K562 (cell line): ENCODE measurements at regions of chr14 and their contacts with region 1.

Region 1: DNA sequence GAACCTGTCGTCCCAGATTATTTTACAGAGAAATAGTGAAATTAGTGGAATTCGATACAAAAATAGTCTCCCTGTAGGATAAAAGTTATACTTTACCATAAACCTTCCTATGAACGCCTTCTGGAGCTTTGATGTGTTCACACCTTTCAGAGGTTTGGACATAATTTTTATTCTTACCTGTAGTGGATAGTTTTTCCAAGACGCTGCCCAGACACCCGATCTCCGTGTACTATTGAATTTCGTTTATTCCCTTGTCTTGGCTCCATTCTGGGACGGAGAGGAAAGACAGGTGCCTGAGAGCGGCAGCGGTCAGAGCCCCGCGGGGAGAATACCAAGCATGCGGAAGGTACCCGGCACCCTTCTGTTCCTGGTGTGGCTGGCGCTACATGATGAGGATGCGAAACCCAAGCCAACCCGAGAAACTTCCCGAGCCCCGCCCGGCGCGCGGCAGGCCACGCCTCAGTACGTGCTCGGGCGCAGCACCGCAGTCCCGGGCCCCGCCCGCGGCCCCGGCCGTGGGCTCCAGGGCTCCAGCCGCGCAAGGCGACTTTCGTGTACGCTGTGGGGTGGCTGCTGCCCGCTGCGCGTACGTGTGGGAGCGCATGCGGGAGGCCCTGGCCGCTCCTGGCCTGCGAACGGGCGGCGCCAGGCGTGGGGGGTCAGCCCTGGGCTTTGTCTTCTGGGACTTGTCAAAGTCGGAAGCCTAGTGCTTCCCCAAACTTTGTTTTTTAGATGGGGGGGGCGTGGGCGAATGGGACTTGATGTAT is 11.3 kb upstream of the SNAPC1 start:
- DNase-seq: peak; percentile 76 to 88 (median 82)
- ATAC-seq: peak; percentile 96
- H3K4me3 ChIP-seq: peak overlapping the region; percentile 65
- H3K27ac ChIP-seq: peak overlapping the region; percentile 60
- H3K4me1 ChIP-seq: peaks cover 5 to 13% of the 10 kb centered on the region in 2 experiments; a peak in 3 of 5 replicates
- H3K27me3 ChIP-seq: no peaks in the 10 kb centered on the region
- CTCF ChIP-seq: no peak
- EP300 ChIP-seq: no peak
- POLR2A ChIP-seq: peak; percentile 55; the same call in 1 of the 2 replicates
- RAD21 ChIP-seq: no peak

Region 2: DNA sequence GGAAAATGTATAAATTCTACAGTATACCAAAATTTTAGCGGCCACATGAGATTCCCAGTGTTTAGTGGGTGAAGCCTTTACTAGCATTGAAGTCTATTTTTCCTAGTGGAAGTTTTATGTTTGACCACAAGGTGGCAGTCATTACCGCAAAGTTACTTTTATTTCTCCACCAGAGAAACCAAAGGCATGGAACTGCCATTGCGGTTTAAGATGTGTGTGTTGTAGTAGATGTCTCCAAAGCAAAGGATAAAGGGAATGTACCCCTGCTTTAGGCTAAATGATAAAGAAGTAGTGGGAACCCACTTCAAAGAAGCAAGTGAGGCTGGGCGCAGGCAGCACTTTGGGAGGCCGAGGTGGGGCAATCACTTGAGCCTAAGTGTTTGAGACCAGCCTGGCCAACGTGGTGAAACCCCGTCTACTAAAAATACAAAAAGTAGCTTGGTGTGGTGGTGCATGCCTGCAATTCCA is 289.0 kb before region 1 on chr14:
- CTCF ChIA-PET with region 1: no interaction called
- POLR2A ChIA-PET with region 1: no interaction called
- in situ Hi-C with region 1: no loop called
- intact Hi-C with region 1: loop called (anchors 5 kb)
- DNase-seq: peak; percentile 43 to 60 (median 54)
- ATAC-seq: peak; percentile 86
- H3K4me3 ChIP-seq: no peak overlapping the region
- H3K27ac ChIP-seq: no peak overlapping the region
- H3K4me1 ChIP-seq: peaks cover 4 to 19% of the 10 kb centered on the region in 2 experiments; a peak in 4 of 5 replicates
- H3K27me3 ChIP-seq: no peaks in the 10 kb centered on the region; a peak in 1 of 5 replicates
- CTCF ChIP-seq: peak; percentile 47 to 65 (median 55); a peak in 5 of 6 replicates
- EP300 ChIP-seq: no peak
- POLR2A ChIP-seq: no peak
- RAD21 ChIP-seq: peak; percentile 78 to 81

Region 3: GRCh38 chr14:61475316-61475715 is 275.6 kb before region 1 on chr14:
- CTCF ChIA-PET with region 1: no interaction called
- POLR2A ChIA-PET with region 1: no interaction called
- in situ Hi-C with region 1: no loop called
- intact Hi-C with region 1: loop called (anchors 5 kb)
- DNase-seq: peak; percentile 38 to 48 (median 45)
- ATAC-seq: peak; percentile 62; the same call in 2 of the 3 replicates
- H3K4me3 ChIP-seq: no peak overlapping the region
- H3K27ac ChIP-seq: no peak overlapping the region
- H3K4me1 ChIP-seq: peaks cover 0 to 3% of the 10 kb centered on the region in 2 experiments; a peak in 1 of 5 replicates
- H3K27me3 ChIP-seq: no peaks in the 10 kb centered on the region
- CTCF ChIP-seq: peak; percentile 9 to 59 (median 52); a peak in 5 of 6 replicates
- EP300 ChIP-seq: no peak
- POLR2A ChIP-seq: no peak
- RAD21 ChIP-seq: peak; percentile 28 to 72

Region 4: GRCh38 chr14:61694830-61695694 is 55.8 kb before region 1 on chr14 and contains the start of gene HIF1A:
- CTCF ChIA-PET with region 1: no interaction called
- POLR2A ChIA-PET with region 1: no interaction called
- in situ Hi-C with region 1: no loop called
- intact Hi-C with region 1: loop called (anchors 5 kb)
- DNase-seq: peak; percentile 95 to 96 (median 96)
- ATAC-seq: peak; percentile 89
- H3K4me3 ChIP-seq: peak within 1 kb of the TSS; percentile 84
- H3K27ac ChIP-seq: peak within 1 kb of the TSS; percentile 88
- H3K4me1 ChIP-seq: peaks cover 0 to 12% of the 10 kb centered on the region in 2 experiments; a peak in 3 of 5 replicates
- H3K27me3 ChIP-seq: no peaks in the 10 kb centered on the region
- CTCF ChIP-seq: no peak; a peak in 1 of 6 replicates
- EP300 ChIP-seq: no peak
- POLR2A ChIP-seq: peak; percentile 89
- RAD21 ChIP-seq: 0 out of 4 replicates have a peak, but pooled peaks of 1 of the 2 experiments have one; percentile 14
- polyA plus RNA-seq, gene HIF1A: 5.9 to 7.5 TPM

Region 5: DNA sequence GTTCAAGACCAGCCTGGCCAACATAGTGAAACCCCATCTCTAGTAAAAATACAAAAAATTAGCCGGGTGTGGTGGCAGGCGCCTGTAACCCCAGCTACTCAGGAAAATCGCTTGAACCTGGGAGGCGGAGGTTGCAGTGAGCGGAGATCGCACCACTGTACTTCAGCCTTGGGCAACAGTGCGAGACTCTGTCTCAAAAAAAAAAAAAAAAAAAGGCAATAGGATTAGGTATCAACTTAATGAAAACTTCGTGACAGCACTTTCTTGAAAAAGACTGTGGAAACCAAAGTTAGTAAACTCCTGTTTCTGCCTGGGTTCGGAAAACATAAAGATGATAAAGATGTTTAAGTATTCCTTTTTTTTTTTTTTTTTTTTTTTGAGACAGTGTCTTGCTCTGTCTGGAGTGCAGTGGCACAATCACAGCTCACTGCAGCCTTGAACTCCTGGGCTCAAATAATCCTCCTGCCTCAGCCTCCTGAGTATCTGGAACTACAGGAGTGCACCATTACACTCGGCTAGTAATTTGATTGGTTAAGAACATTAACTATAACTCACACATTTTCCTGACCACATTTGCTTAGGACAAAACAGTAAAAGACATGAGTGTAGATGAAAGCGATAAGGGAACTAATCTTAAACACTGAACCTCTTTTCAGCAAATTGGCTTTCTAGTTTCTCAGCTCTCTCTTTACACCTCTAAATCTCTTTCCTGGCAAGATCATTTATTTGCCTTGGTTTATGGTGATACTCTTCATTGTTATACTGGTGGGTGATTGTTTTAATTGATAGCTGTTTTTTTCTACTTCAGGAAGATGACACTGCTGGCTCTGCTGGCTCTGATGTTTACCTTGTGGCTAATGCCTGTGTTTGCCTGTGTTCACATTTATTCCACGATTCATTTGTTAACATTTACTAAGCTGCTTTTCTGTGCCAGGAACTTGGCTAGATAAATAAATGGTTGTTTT is 39.8 kb before region 1 on chr14:
- CTCF ChIA-PET with region 1: no interaction called
- POLR2A ChIA-PET with region 1: no interaction called
- in situ Hi-C with region 1: no loop called
- intact Hi-C with region 1: no loop called
- DNase-seq: peak in 1 of 4 experiments; percentile 8
- ATAC-seq: peak; percentile 36
- H3K4me3 ChIP-seq: no peak overlapping the region
- H3K27ac ChIP-seq: no peak overlapping the region
- H3K4me1 ChIP-seq: no peaks in the 10 kb centered on the region; a peak in 2 of 5 replicates
- H3K27me3 ChIP-seq: no peaks in the 10 kb centered on the region
- CTCF ChIP-seq: no peak
- EP300 ChIP-seq: no peak
- POLR2A ChIP-seq: no peak
- RAD21 ChIP-seq: no peak

Region 6: DNA sequence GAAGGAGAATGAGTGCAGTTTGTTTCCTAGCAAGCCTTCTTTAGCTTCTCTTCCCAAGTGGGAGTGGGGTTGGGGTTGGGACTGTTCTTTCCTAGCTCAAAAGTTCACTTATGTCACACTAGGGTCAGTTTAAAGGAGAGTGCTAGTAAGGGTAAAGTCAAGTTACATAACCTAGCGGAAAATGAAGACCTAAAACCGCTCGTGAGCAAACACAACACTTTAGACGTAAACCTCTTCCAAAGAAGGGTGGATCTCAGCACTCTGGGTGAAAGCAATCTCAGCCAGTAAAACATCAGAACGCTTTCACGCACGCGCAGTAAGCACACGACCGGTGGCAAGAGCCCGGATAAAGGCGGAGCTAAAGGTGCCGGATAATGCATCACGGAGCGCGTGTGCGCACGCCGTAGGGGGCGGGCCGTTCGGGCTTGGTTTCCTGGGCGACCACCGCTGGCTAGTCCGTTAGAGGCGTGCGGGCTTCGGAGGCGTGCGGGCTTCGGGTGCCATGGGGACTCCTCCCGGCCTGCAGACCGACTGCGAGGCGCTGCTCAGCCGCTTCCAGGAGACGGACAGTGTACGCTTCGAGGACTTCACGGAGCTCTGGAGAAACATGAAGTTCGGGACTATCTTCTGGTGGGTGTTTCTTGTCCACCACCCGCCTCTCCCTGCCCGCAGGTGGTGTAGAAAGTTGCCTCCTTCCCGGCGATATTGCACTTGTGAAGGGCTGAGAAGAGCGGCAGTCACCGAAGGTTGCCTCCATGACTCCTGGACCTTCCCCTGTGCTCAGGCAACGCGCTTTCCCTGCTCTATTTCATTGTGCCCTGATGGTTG is 11.3 kb after region 1 on chr14 and contains the start of gene SNAPC1:
- CTCF ChIA-PET with region 1: interaction called, 6 read pairs
- POLR2A ChIA-PET with region 1: interaction called, 23 read pairs
- in situ Hi-C with region 1: no loop called
- intact Hi-C with region 1: no loop called
- DNase-seq: peak; percentile 93 to 98 (median 94)
- ATAC-seq: peak; percentile 97
- H3K4me3 ChIP-seq: peak within 1 kb of the TSS; percentile 77
- H3K27ac ChIP-seq: peak within 1 kb of the TSS; percentile 86
- H3K4me1 ChIP-seq: peaks cover 0 to 5% of the 10 kb centered on the region in 2 experiments; a peak in 2 of 5 replicates
- H3K27me3 ChIP-seq: no peaks in the 10 kb centered on the region; a peak in 1 of 5 replicates
- CTCF ChIP-seq: no peak
- EP300 ChIP-seq: no peak
- POLR2A ChIP-seq: peak; percentile 73
- RAD21 ChIP-seq: no peak
- polyA plus RNA-seq, gene SNAPC1: 5.2 to 8.1 TPM

Region 7: GRCh38 chr14:61803755-61804154 is 52.9 kb after region 1 on chr14:
- CTCF ChIA-PET with region 1: no interaction called
- POLR2A ChIA-PET with region 1: no interaction called
- in situ Hi-C with region 1: no loop called
- intact Hi-C with region 1: no loop called
- DNase-seq: no peak
- ATAC-seq: no peak
- H3K4me3 ChIP-seq: no peak overlapping the region
- H3K27ac ChIP-seq: no peak overlapping the region
- H3K4me1 ChIP-seq: no peaks in the 10 kb centered on the region
- H3K27me3 ChIP-seq: no peaks in the 10 kb centered on the region
- CTCF ChIP-seq: no peak
- EP300 ChIP-seq: no peak
- POLR2A ChIP-seq: no peak
- RAD21 ChIP-seq: no peak

Region 8: DNA sequence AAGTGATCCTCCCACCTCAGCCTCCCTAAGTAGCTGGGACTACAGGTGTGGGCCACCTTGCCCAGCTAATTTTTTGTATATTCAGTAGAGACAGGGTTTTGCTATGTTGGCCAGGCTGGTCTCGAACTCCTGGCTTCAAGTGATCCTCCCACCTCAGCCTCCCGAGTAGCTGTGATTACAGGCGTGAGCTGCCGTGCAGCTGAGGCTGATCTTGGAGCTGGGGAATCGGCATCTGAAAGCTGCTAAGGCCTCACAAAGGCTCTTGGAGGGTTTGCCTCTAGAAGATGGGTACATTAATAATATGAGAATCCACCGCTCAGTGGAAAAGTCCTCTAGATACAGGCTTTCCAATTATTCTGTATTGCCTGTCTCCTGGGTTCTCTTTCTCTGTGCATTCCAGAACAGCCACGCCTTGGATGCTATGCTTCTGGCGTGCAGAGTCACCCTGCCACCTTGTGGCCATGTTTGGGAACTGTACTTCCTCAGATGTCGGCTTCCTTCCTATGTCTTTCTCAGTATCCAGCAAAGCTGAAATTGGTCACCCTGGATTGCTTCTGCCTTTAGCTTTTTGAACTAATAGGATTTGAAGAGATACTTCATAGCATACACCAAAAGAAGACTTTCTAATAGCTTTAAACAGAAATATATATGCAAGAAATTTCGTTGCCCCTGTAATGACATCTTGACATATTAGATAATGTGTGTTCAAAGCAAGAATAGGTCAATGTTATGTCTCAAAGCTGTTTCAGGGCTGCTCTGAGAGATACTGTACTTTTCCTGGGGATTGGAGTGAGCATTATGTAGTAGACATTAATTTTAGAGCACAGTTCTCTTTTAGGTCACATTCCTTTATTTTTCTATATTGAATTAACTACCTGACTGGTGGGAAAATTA is 86.7 kb after region 1 on chr14:
- CTCF ChIA-PET with region 1: no interaction called
- POLR2A ChIA-PET with region 1: interaction called, 3 read pairs
- in situ Hi-C with region 1: no loop called
- intact Hi-C with region 1: loop called (anchors 1 kb)
- DNase-seq: peak; percentile 50 to 79 (median 63)
- ATAC-seq: peak; percentile 97
- H3K4me3 ChIP-seq: no peak overlapping the region
- H3K27ac ChIP-seq: no peak overlapping the region
- H3K4me1 ChIP-seq: no peaks in the 10 kb centered on the region
- H3K27me3 ChIP-seq: no peaks in the 10 kb centered on the region
- CTCF ChIP-seq: peak; percentile 78 to 87 (median 79)
- EP300 ChIP-seq: no peak
- POLR2A ChIP-seq: no peak
- RAD21 ChIP-seq: peak; percentile 83 to 91